Activated CD8-positive, alpha-beta T cell treated with anti-CD3 and anti-CD28 coated beads, Interleukin-2, amount 10 ng/mL, durations not matched to agents 7 days and 5 days (primary cell): ENCODE measurements at regions of chr17 and their contacts with region 1.

Region 1: DNA sequence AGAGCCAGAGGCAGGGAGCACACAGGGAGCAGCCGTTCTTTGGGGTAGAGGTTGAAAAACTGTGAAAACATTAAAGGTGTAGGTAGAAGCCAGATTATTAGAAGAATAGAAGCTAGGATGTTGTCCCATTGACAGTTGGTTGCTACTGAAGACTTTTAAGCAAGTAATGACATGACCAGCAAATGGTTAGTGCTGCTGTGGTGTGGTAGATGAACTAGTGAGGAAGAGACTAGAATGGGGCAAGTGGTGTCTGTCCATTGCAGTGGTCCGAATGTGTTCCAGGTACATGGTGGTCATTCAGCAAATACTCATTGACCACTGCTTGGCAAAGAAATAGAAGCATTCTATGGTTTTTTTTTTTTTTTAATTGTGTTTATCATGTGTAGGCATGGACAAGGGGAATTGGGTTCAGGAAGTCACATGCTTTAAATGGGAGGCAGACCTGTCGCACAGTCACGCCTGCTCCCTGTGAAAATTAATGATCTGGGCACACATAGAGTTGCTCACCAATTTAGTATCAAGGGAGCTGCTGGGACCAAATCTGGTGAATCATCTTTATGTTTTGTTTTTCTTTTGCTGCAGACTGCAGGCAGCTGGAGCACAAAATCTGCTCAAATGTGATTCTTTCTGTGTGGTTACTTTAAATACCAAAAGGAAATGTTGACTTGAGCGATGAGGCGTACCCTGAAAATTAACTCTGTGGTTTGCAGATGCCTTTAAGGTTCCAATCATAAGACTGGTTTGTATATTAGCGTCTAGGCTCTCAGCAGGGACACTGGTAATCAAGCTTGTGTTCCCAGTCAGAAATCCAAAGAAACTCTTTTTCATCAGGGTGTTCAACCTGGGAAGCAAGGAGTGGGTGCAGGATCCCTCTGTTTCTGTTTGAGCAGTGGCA is 30.7 kb downstream of the YPEL2 start:
- DNase-seq: peak; percentile 67
- ATAC-seq: peak; percentile 48
- H3K4me3 Mint-ChIP-seq: peak overlapping the region; percentile 69
- H3K27ac Mint-ChIP-seq: peak overlapping the region; percentile 89
- H3K4me1 Mint-ChIP-seq: peaks cover 88% of the 10 kb centered on the region
- H3K27me3 Mint-ChIP-seq: no peaks in the 10 kb centered on the region

Region 2: DNA sequence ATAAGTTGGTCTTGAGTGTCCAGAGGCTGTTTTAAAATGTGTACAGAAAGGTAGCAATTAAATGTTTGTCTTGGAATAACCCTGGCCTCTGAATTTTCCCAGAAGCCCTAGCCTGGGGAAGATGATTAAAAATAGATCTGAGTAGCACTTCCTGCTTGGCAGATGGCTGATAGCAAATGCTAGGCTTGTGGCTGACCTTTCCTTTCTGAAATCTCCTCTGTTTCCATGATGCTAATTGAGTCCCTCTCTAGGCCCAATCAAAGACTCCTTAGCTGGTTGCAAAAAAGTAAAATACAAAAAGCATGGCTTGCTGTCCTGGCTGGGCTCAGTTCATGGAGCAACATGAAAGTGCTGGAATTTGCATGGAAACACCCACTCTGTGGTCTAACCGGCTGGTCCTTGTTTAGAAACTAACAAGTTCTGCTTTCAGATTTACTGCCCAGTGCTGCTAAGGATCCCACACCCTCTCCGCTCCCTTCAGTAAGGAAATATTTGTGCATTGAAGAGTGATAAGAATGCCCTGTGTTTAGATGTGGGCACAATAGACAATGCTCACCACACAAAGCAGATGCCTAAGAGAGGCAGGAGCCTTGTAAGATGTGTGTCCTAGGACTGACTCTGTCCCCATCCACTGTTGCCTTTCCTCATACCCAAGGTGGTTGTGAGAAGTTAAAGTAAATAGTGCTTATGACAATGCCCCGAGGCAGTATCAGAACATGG is 10.1 kb after region 1 on chr17:
- CTCF ChIA-PET with region 1: interaction called, 14 read pairs
- POLR2A ChIA-PET with region 1: interaction called, 3 read pairs
- DNase-seq: no peak
- ATAC-seq: peak; percentile 45
- H3K4me3 Mint-ChIP-seq: no peak overlapping the region
- H3K27ac Mint-ChIP-seq: peak overlapping the region; percentile 69
- H3K4me1 Mint-ChIP-seq: peaks cover 63% of the 10 kb centered on the region
- H3K27me3 Mint-ChIP-seq: no peaks in the 10 kb centered on the region